Naive thymus-derived CD4-positive, alpha-beta T cell (primary cell): ENCODE measurements at regions of chr12 and their contacts with region 1.

Region 1: DNA sequence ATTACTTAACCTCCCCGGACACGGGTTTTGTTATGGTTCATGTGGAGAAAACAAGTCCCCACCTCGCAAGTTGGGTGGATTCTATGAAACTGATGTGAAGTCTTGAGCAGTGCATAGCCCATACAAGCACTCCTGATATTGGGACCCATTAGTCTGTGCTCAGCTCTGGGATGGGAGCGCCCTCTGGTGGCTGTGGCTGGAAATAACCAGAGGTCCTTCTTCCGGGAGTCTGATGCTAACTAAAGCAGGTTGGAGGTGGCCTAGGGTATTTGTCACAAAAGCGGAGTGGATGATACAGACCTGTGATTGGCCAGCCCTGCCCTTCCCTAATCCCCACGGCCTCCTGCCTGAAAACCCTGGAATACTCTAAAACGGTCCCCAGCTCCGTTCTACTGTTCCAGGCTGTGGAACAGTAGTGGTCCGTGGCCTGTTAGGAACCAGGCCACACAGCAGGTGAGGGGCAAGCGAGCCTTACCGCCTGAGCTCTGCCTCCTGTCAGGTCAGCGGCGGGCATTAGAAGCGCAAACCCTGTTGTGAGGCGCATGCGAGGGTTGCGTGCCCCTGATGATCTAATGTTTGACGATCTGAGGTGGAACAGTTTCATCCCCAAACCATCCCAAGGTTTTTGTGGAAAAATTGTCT is 6.4 kb downstream of the SLC48A1 start:
- DNase-seq: peak; percentile 77 to 96 (median 88)
- ATAC-seq: peak; percentile 95
- H3K4me3 ChIP-seq: no peak overlapping the region
- H3K4me3 Mint-ChIP-seq: no peak overlapping the region
- H3K27ac ChIP-seq: no peak overlapping the region
- H3K27ac Mint-ChIP-seq: peak overlapping the region; percentile 35 to 82 (median 60)
- H3K4me1 ChIP-seq: no peaks in the 10 kb centered on the region
- H3K4me1 Mint-ChIP-seq: peaks cover 19 to 46% (median 25%) of the 10 kb centered on the region in 7 donors
- H3K27me3 ChIP-seq: no peaks in the 10 kb centered on the region
- H3K27me3 Mint-ChIP-seq: no peaks in the 10 kb centered on the region

Region 2: GRCh38 chr12:47651368-47652254 is 127.8 kb before region 1 on chr12:
- CTCF ChIA-PET with region 1: no interaction called
- POLR2A ChIA-PET with region 1: no interaction called
- intact Hi-C with region 1: loop called in 1 of 2 experiments (anchors 1 kb)
- DNase-seq: peak in 8 of 9 donors; percentile 39 to 69 (median 56)
- ATAC-seq: peak; percentile 97
- H3K4me3 ChIP-seq: peak overlapping the region; percentile 38
- H3K4me3 Mint-ChIP-seq: peak overlapping the region; percentile 21 to 75 (median 44)
- H3K27ac ChIP-seq: peak overlapping the region; percentile 9
- H3K27ac Mint-ChIP-seq: peak overlapping the region in 8 of 9 donors; percentile 11 to 94 (median 64)
- H3K4me1 ChIP-seq: peaks cover 5 to 6% of the 10 kb centered on the region in 2 donors
- H3K4me1 Mint-ChIP-seq: peaks cover 8 to 21% (median 16%) of the 10 kb centered on the region in 7 donors
- H3K27me3 ChIP-seq: no peaks in the 10 kb centered on the region
- H3K27me3 Mint-ChIP-seq: no peaks in the 10 kb centered on the region

Region 3: DNA sequence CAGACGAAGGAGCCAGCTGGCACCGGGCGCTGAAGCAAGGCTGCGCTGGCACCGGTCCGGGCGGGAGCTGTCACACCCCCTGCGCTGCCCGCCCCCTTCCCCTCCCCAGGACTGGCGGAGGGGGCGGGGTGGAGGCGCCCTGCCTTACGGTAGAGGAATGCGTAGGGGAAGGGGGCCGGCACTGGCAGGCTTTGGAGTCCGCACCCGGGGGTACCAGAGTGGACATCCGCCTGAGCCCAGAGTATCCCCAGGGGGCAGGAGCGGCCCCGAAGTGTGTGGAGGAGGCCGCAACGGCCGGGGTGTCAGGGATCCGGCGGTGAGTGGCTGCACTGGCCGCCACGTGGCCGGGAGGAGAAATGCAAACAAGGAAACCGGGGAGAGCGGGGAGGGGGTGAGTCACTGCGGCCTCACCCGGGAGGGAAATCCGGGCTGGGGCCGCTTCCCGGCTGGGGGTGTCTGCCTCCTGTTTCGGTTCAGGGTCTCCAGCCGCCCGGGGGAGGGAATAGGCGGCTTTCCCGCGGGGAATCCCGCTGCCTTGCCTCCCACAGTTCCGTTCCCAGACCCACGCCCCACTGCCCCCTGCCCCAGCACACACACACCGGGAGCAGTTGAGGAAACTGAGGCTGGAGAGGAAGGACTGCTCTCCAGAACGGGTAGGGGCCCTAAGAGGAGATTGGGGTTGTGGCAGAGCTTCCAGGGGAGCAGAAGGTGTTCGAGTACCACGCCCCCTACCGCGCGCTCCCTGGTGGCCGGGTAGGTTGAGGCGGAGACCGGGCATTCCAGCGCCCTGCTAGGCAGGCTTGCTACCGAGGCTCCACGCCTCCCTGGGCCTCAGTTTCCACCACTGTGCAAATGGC is 20.4 kb before region 1 on chr12 and contains the start of gene RAPGEF3:
- CTCF ChIA-PET with region 1: interaction called, 4 read pairs
- POLR2A ChIA-PET with region 1: interaction called, 3 read pairs
- intact Hi-C with region 1: loop called in 1 of 2 experiments (anchors 1 kb)
- DNase-seq: peak; percentile 47 to 81 (median 60)
- ATAC-seq: peak; percentile 91
- H3K4me3 ChIP-seq: peak within 1 kb of the TSS; percentile 66
- H3K4me3 Mint-ChIP-seq: peak within 1 kb of the TSS; percentile 61 to 85 (median 80)
- H3K27ac ChIP-seq: peak within 1 kb of the TSS; percentile 27
- H3K27ac Mint-ChIP-seq: peak within 1 kb of the TSS in 4 of 9 donors; percentile 29 to 55 (median 47)
- H3K4me1 ChIP-seq: peaks cover 9 to 11% of the 10 kb centered on the region in 2 donors
- H3K4me1 Mint-ChIP-seq: peaks cover 0 to 23% (median 9%) of the 10 kb centered on the region in 7 donors
- H3K27me3 ChIP-seq: no peaks in the 10 kb centered on the region
- H3K27me3 Mint-ChIP-seq: peaks cover 0 to 5% (median 0%) of the 10 kb centered on the region in 5 donors
- total RNA-seq, gene RAPGEF3: 0.08 to 1.9 (median 1.1) TPM in 4 of 5 experiments, not detected in the other

Region 4: GRCh38 chr12:47767216-47767724 is 12.2 kb before region 1 on chr12:
- CTCF ChIA-PET with region 1: interaction called, 28 read pairs
- POLR2A ChIA-PET with region 1: interaction called, 4 read pairs
- intact Hi-C with region 1: no loop called
- DNase-seq: peak; percentile 40 to 73 (median 57)
- ATAC-seq: peak; percentile 81
- H3K4me3 ChIP-seq: no peak overlapping the region
- H3K4me3 Mint-ChIP-seq: no peak overlapping the region
- H3K27ac ChIP-seq: no peak overlapping the region
- H3K27ac Mint-ChIP-seq: no peak overlapping the region
- H3K4me1 ChIP-seq: peaks cover 3 to 10% of the 10 kb centered on the region in 2 donors
- H3K4me1 Mint-ChIP-seq: peaks cover 0 to 16% (median 5%) of the 10 kb centered on the region in 7 donors
- H3K27me3 ChIP-seq: no peaks in the 10 kb centered on the region
- H3K27me3 Mint-ChIP-seq: peaks cover 0 to 13% (median 0%) of the 10 kb centered on the region in 5 donors

Region 5: DNA sequence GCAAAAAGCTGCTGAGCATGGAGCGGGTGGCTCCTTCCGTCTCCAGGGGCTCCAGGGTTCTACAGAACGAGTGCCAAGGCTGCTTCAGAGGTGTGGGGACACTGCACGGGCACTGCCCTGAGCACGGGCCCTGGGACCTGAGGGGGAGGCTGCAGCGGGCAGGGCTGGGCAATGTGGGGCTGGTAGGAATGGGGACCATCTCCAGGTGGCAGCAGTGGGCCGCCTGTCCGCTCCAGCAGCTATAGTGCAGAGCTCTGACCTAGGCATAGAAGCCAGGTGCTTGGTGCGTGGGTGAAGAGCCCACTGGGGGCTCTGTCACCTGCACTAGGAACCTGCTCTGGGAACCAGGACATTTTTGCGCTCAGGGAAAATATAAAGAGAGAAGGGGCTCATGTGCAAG is 18.0 kb after region 1 on chr12:
- CTCF ChIA-PET with region 1: interaction called, 4 read pairs
- POLR2A ChIA-PET with region 1: interaction called, 3 read pairs
- intact Hi-C with region 1: loop called in 1 of 2 experiments (anchors 1 kb)
- DNase-seq: peak in 6 of 9 donors; percentile 36 to 54 (median 46)
- ATAC-seq: peak; percentile 74
- H3K4me3 ChIP-seq: no peak overlapping the region
- H3K4me3 Mint-ChIP-seq: peak overlapping the region in 3 of 10 donors; percentile 53 to 64 (median 61)
- H3K27ac ChIP-seq: peak overlapping the region; percentile 51
- H3K27ac Mint-ChIP-seq: peak overlapping the region; percentile 57 to 93 (median 87)
- H3K4me1 ChIP-seq: peaks cover 6 to 35% of the 10 kb centered on the region in 2 donors
- H3K4me1 Mint-ChIP-seq: peaks cover 20 to 47% (median 42%) of the 10 kb centered on the region in 7 donors
- H3K27me3 ChIP-seq: no peaks in the 10 kb centered on the region
- H3K27me3 Mint-ChIP-seq: no peaks in the 10 kb centered on the region

Region 6: GRCh38 chr12:47819896-47820630 is 40.6 kb after region 1 on chr12 and contains the start of gene HDAC7:
- CTCF ChIA-PET with region 1: interaction called, 3 read pairs
- POLR2A ChIA-PET with region 1: interaction called, 8 read pairs
- intact Hi-C with region 1: loop called (anchors 1 kb)
- DNase-seq: peak; percentile 54 to 79 (median 69)
- ATAC-seq: peak; percentile 76
- H3K4me3 ChIP-seq: peak within 1 kb of the TSS; percentile 82
- H3K4me3 Mint-ChIP-seq: peak within 1 kb of the TSS; percentile 86 to 99 (median 96)
- H3K27ac ChIP-seq: peak within 1 kb of the TSS; percentile 88
- H3K27ac Mint-ChIP-seq: peak within 1 kb of the TSS; percentile 96 to 99 (median 97)
- H3K4me1 ChIP-seq: peaks cover 55 to 73% of the 10 kb centered on the region in 2 donors
- H3K4me1 Mint-ChIP-seq: peaks cover 75 to 87% (median 82%) of the 10 kb centered on the region in 7 donors
- H3K27me3 ChIP-seq: no peaks in the 10 kb centered on the region
- H3K27me3 Mint-ChIP-seq: no peaks in the 10 kb centered on the region
- total RNA-seq, gene HDAC7: 150 to 194 (median 188) TPM